ENCODE measurements at regions of chr6 and their contacts with region 1.

Region 1: GRCh38 chr6:42547407-42548329 is 16.2 kb upstream of the UBR2 start:
- DNase-seq: peak; percentile 88
- ATAC-seq: peak; percentile 96
- H3K4me3 Mint-ChIP-seq: peak overlapping the region; percentile 78
- H3K27ac Mint-ChIP-seq: peak overlapping the region; percentile 45; the same call in 1 of the 2 replicates
- H3K4me1 Mint-ChIP-seq: peaks cover 14% of the 10 kb centered on the region
- H3K27me3 Mint-ChIP-seq: peaks cover 8% of the 10 kb centered on the region
- CTCF ChIP-seq: peak; percentile 98

Region 2: GRCh38 chr6:42030585-42031506 is 516.8 kb before region 1 on chr6:
- CTCF ChIA-PET with region 1: no interaction called
- POLR2A ChIA-PET with region 1: no interaction called
- DNase-seq: peak; percentile 24
- ATAC-seq: peak; percentile 76
- H3K4me3 Mint-ChIP-seq: no peak overlapping the region
- H3K27ac Mint-ChIP-seq: no peak overlapping the region
- H3K4me1 Mint-ChIP-seq: peaks cover 12% of the 10 kb centered on the region
- H3K27me3 Mint-ChIP-seq: peaks cover 5% of the 10 kb centered on the region; the same call in 1 of the 2 replicates
- CTCF ChIP-seq: no peak

Region 3: DNA sequence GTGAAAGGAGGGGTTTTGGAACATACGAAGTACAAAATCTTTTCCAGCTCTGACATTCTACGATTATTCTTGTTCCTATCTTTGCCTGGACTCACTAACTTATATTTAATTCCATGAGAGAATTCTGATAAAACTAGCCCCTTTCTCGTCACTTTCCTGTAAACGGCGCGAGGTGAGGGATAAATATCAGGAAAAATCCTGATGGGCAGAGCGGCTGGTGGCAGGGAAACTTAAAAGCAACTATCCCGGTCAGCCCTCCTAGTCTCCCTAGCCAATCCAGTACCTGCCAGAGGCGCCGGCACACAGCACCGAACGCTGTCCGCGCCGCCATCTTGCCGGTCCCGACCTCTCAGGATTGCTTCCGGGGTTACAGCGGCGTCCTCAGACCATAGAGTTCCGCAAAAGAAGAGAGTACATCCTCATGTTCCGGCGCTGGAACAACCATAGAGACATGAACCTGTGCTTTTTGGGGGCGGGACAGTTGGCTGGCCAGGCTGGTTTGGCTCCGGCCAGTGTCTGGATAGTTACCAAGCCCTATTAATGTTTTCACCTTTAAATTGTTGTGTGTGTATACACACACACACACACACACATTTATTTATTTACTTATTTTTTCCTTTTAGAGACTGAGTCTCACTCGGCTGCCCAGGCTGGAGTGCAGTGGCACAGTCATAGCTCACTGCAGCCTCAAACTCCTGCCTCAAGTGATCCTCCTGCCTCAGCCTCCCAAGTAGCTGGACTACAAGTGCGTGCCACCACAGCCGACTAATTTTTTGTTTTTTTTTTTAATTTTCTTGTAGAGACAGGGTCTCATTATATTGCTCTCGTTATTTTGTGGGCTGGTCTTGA is 329.9 kb before region 1 on chr6 and contains the start of gene MRPS10:
- CTCF ChIA-PET with region 1: interaction called, 19 read pairs
- POLR2A ChIA-PET with region 1: no interaction called
- DNase-seq: peak; percentile 95
- ATAC-seq: peak; percentile 99
- H3K4me3 Mint-ChIP-seq: peak within 1 kb of the TSS; percentile 100
- H3K27ac Mint-ChIP-seq: peak within 1 kb of the TSS; percentile 100
- H3K4me1 Mint-ChIP-seq: peaks cover 14% of the 10 kb centered on the region
- H3K27me3 Mint-ChIP-seq: no peaks in the 10 kb centered on the region
- CTCF ChIP-seq: no peak
- total RNA-seq, gene MRPS10: 30.7 to 32.9 TPM (median 31.3 TPM) in 3 replicates

Region 4: GRCh38 chr6:42304053-42304712 is 243.5 kb before region 1 on chr6:
- CTCF ChIA-PET with region 1: interaction called, 23 read pairs
- POLR2A ChIA-PET with region 1: no interaction called
- DNase-seq: no peak
- ATAC-seq: peak; percentile 53
- H3K4me3 Mint-ChIP-seq: no peak overlapping the region
- H3K27ac Mint-ChIP-seq: peak overlapping the region; percentile 19; the same call in 1 of the 2 replicates
- H3K4me1 Mint-ChIP-seq: peaks cover 40% of the 10 kb centered on the region
- H3K27me3 Mint-ChIP-seq: no peaks in the 10 kb centered on the region; the same call in 1 of the 2 replicates
- CTCF ChIP-seq: no peak

Region 5: GRCh38 chr6:42375007-42375635 is 172.5 kb before region 1 on chr6:
- CTCF ChIA-PET with region 1: interaction called, 10 read pairs
- POLR2A ChIA-PET with region 1: no interaction called
- DNase-seq: no peak
- ATAC-seq: no peak
- H3K4me3 Mint-ChIP-seq: no peak overlapping the region
- H3K27ac Mint-ChIP-seq: peak overlapping the region; percentile 40
- H3K4me1 Mint-ChIP-seq: peaks cover 8% of the 10 kb centered on the region
- H3K27me3 Mint-ChIP-seq: no peaks in the 10 kb centered on the region
- CTCF ChIP-seq: no peak

Region 6: GRCh38 chr6:42429850-42430214 is 117.8 kb before region 1 on chr6:
- CTCF ChIA-PET with region 1: interaction called, 12 read pairs
- POLR2A ChIA-PET with region 1: no interaction called
- DNase-seq: no peak
- ATAC-seq: no peak
- H3K4me3 Mint-ChIP-seq: no peak overlapping the region
- H3K27ac Mint-ChIP-seq: no peak overlapping the region
- H3K4me1 Mint-ChIP-seq: peaks cover 49% of the 10 kb centered on the region
- H3K27me3 Mint-ChIP-seq: no peaks in the 10 kb centered on the region
- CTCF ChIP-seq: no peak

Region 7: DNA sequence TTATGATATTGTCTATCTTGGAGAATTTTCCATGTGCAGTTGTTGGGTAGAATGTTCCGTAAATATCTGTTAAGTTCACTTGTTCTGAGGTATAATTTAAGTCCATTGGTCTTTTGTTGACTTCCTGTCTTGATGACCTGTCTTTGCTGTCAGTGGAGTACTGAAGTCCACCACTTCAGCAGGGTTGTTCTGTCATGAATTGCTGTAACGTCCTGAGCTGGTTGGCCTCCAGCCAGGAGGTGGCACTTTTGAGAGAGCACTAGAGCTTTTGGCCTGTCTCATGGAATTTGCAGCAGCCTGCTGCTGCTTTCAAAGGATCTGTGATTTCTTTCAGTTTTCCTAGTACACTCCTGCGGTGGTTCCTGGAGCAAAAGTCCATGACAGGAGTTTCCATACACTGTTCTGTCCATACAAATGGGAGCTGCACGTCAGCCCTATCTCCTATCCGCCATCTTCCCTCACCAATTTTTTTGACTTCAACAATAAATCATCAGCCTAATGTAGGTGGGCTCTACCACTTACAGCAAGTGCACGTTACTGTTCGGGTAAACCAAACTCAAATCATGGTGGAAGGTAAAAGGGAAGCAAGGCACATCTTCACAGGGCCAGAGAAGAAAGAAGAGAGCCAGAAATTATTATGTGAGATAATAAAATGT is 49.1 kb before region 1 on chr6:
- CTCF ChIA-PET with region 1: interaction called, 14 read pairs
- POLR2A ChIA-PET with region 1: no interaction called
- DNase-seq: peak; percentile 24
- ATAC-seq: peak; percentile 80
- H3K4me3 Mint-ChIP-seq: no peak overlapping the region
- H3K27ac Mint-ChIP-seq: no peak overlapping the region
- H3K4me1 Mint-ChIP-seq: no peaks in the 10 kb centered on the region
- H3K27me3 Mint-ChIP-seq: no peaks in the 10 kb centered on the region; the same call in none of the 2 replicates
- CTCF ChIP-seq: no peak

Region 8: DNA sequence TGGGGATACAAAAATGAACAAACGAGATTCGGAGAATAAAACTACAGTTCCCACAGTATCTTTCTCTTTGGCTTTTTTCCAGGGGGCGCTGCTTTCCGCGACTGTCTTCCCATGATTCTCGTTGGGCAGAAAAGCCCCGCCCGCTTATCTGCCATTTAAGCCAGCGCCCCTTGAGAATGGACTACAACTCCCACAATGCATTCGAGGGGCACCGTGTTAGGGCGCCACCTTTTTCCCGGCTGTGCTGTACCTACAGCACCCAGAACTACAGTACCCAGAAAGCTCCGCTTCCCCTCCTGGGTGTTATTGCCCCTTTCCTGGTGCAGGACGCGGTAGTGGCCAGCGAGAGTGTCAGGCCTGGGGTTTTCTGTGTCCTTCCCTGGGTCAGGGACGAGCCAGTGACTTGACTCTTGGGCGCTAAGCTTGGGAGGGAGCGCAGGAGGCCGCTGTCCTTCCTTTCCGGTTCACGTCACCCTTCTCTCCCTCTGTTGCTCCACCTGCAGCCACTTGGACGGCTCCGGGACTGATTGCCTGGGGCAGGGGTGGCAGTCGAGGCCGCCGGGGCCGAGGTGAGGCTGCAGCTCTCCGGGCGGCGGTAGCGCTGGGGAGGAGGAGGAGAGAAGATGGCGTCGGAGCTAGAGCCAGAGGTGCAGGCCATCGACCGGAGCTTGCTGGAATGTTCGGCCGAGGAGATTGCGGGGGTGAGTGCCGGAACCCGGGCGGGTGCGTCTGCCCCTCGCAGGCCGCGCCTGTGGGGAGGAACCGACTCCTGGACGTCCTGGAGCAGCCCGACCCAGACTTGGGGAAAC is 16.2 kb after region 1 on chr6 and contains the start of gene UBR2:
- CTCF ChIA-PET with region 1: interaction called, 82 read pairs
- POLR2A ChIA-PET with region 1: interaction called, 10 read pairs
- DNase-seq: peak; percentile 96
- ATAC-seq: peak; percentile 98
- H3K4me3 Mint-ChIP-seq: peak within 1 kb of the TSS; percentile 90
- H3K27ac Mint-ChIP-seq: peak within 1 kb of the TSS; percentile 93
- H3K4me1 Mint-ChIP-seq: peaks cover 8% of the 10 kb centered on the region
- H3K27me3 Mint-ChIP-seq: peaks cover 4% of the 10 kb centered on the region; the same call in 1 of the 2 replicates
- CTCF ChIP-seq: 0 out of 2 replicates have a peak, but pooled peaks have one; percentile 26
- total RNA-seq, gene UBR2: 16.4 to 18.8 TPM (median 17.1 TPM) in 3 replicates

Region 9: DNA sequence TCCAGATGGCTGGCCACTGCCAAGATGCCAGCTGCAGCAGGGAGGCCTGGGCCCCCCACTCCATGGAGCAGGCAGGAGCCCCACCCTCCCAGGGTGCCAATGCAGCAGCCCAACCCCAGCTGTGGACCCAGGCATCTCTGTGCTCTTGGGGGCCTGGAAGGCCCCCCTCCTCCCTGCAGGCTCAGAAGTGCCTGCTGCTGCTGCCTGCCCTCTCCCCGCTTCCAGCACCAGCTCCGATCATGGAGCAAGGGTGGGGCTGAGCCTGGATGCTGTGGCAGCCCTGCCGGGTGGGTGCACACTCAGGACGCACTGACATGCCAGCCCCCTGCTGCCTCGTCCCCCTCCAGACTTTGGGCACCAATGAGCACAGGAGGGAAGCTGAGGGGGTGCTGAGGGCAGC is 864.9 kb after region 1 on chr6:
- CTCF ChIA-PET with region 1: no interaction called
- POLR2A ChIA-PET with region 1: no interaction called
- DNase-seq: no peak
- ATAC-seq: no peak
- H3K4me3 Mint-ChIP-seq: no peak overlapping the region
- H3K27ac Mint-ChIP-seq: no peak overlapping the region
- H3K4me1 Mint-ChIP-seq: no peaks in the 10 kb centered on the region
- H3K27me3 Mint-ChIP-seq: peaks cover 13% of the 10 kb centered on the region
- CTCF ChIP-seq: no peak

Measured in WTC11 (cell line).